ENCODE measurements at regions of chr15 and their contacts with region 1.

Region 1: GRCh38 chr15:68383161-68384074 is 48.5 kb downstream of the ITGA11 start:
- DNase-seq: peak; percentile 41 to 70 (median 60)
- H3K4me3 ChIP-seq: no peak overlapping the region
- H3K4me3 Mint-ChIP-seq: no peak overlapping the region
- H3K27ac ChIP-seq: no peak overlapping the region
- H3K27ac Mint-ChIP-seq: no peak overlapping the region
- H3K4me1 ChIP-seq: no peaks in the 10 kb centered on the region
- H3K4me1 Mint-ChIP-seq: peaks cover 4% of the 10 kb centered on the region
- H3K27me3 ChIP-seq: no peaks in the 10 kb centered on the region
- H3K27me3 Mint-ChIP-seq: peaks cover 2 to 5% (median 3%) of the 10 kb centered on the region in 3 donors
- CTCF ChIP-seq: peak; percentile 84

Region 2: GRCh38 chr15:68252925-68253534 is 130.4 kb before region 1 on chr15:
- intact Hi-C with region 1: loop called in 1 of 2 experiments (anchors 5 kb)
- DNase-seq: peak; percentile 54 to 72 (median 64)
- H3K4me3 ChIP-seq: no peak overlapping the region
- H3K4me3 Mint-ChIP-seq: no peak overlapping the region
- H3K27ac ChIP-seq: no peak overlapping the region
- H3K27ac Mint-ChIP-seq: no peak overlapping the region
- H3K4me1 ChIP-seq: peaks cover 32 to 34% of the 10 kb centered on the region in 2 donors
- H3K4me1 Mint-ChIP-seq: peaks cover 31% of the 10 kb centered on the region
- H3K27me3 ChIP-seq: no peaks in the 10 kb centered on the region
- H3K27me3 Mint-ChIP-seq: peaks cover 0 to 2% (median 0%) of the 10 kb centered on the region in 3 donors
- CTCF ChIP-seq: peak; percentile 82

Region 3: GRCh38 chr15:68304589-68305337 is 78.7 kb before region 1 on chr15:
- intact Hi-C with region 1: loop called (anchors 1 to 5 kb)
- DNase-seq: no peak
- H3K4me3 ChIP-seq: no peak overlapping the region
- H3K4me3 Mint-ChIP-seq: no peak overlapping the region
- H3K27ac ChIP-seq: no peak overlapping the region
- H3K27ac Mint-ChIP-seq: no peak overlapping the region
- H3K4me1 ChIP-seq: peaks cover 21 to 25% of the 10 kb centered on the region in 2 donors
- H3K4me1 Mint-ChIP-seq: peaks cover 29% of the 10 kb centered on the region
- H3K27me3 ChIP-seq: no peaks in the 10 kb centered on the region
- H3K27me3 Mint-ChIP-seq: peaks cover 2 to 4% (median 2%) of the 10 kb centered on the region in 3 donors
- CTCF ChIP-seq: no peak

Region 4: GRCh38 chr15:68341760-68342725 is 41.4 kb before region 1 on chr15:
- intact Hi-C with region 1: no loop called
- DNase-seq: peak in 2 of 3 donors; percentile 34 to 87
- H3K4me3 ChIP-seq: no peak overlapping the region
- H3K4me3 Mint-ChIP-seq: no peak overlapping the region
- H3K27ac ChIP-seq: peak overlapping the region in 1 of 2 donors; percentile 22
- H3K27ac Mint-ChIP-seq: no peak overlapping the region
- H3K4me1 ChIP-seq: peaks cover 12 to 16% of the 10 kb centered on the region in 2 donors
- H3K4me1 Mint-ChIP-seq: peaks cover 15% of the 10 kb centered on the region
- H3K27me3 ChIP-seq: no peaks in the 10 kb centered on the region
- H3K27me3 Mint-ChIP-seq: peaks cover 1 to 5% (median 1%) of the 10 kb centered on the region in 3 donors
- CTCF ChIP-seq: no peak